PC-3 (cell line): ENCODE measurements at regions of chr13 and their contacts with region 1.

Region 1: DNA sequence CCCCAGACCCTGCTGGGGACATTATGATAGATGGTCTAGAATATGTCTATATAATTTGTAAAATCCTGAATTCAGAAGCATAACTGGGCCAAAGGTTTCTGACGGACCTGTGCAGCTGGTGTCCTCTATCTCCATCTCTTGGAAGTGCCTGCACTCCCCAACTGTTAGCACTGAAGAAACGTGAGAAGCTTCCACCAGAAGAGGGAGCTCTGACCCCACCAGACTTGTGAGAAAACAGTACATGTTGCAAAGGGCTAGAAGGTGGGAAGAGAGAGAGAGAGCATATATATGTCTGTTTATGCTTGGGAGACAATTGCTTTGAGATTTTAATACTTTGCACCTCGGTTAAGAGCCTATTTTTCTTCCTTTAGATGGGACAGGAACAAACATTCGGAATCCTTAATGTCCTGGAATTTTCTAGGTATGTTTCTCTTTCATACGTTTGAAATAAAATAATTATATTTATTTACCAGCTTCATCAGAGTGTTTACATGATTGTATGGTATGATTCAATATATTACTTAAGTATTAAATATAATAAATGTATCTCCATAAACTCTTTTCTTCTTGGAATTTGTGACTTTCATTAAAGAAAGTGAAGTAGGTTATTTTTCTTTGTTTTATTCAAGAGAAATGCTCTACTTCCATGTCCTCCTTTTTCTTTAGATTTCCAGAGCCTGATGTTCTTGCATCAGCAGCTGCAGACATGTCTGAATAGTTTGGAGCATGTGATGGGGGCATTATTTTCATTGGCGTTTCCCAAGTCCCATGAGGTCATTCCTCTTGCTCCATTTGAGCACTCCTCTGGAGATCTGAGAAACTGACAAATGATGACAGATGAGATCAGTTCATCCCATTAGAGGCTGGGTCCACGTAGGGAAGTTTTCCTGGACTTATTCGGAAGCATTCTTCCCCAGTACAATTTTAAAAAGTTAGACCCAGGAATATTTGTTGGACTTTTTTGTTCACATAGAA is 202.9 kb downstream of the ATP8A2 start:
- DNase-seq: peak; percentile 88
- ATAC-seq: peak; percentile 97
- H3K4me3 ChIP-seq: no peak overlapping the region
- H3K27ac ChIP-seq: no peak overlapping the region
- H3K4me1 ChIP-seq: no peaks in the 10 kb centered on the region
- H3K27me3 ChIP-seq: peaks cover 64% of the 10 kb centered on the region
- CTCF ChIP-seq: peak; percentile 88

Region 2: DNA sequence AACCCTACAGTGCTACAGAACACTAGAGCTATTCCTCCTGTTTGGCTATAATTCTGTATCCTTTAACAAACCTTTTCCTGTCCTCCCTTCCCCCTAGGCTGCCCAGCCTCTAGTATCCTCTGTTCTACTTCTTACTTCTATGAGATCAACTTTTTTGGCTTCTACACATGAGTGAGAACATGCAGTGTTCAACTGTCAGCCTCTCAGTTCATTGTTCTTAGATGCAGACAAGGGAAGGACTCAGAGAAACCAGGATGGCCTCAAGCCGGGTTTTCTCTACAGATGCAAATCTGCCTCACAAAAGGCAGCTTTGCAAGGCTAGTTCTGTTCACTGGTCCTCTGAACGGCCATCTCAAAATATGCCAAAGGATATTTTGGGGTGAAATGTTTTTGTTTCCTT is 421.0 kb before region 1 on chr13:
- CTCF ChIA-PET with region 1: no interaction called
- POLR2A ChIA-PET with region 1: no interaction called
- intact Hi-C with region 1: no loop called
- DNase-seq: no peak
- ATAC-seq: no peak
- H3K4me3 ChIP-seq: no peak overlapping the region
- H3K27ac ChIP-seq: no peak overlapping the region
- H3K4me1 ChIP-seq: no peaks in the 10 kb centered on the region
- H3K27me3 ChIP-seq: peaks cover 71% of the 10 kb centered on the region
- CTCF ChIP-seq: no peak

Region 3: DNA sequence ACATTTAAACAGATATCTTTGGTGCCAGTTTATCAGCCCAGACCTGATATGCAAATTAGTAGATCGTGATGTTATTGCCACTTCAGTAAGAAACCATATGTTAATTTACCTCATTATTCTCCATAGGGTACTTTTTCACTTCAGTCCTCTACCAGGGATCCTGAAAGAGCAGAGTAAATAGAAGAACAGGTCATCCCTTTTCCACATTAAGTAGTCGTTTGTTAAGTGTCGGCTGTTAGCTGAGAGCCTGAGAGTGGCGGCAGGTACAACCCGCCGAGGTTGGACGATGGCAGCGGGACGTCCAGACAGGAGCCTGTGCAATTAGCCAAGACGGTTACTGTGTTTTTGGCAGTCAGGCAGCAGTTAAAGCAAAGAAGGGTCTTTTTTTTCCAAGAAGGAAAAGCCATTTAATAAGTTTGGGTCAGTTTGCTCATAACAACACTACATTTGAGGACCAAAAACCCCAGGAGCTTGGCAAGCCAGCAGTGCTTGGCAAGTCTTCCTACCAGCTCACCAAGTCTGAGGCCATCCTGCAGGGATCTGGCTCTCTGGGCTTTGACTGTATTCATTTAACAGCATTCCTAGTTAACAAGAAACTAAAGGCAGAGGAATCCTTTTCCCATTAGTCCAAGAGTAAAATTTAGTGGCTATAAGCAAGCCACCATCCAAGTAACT is 245.3 kb after region 1 on chr13:
- CTCF ChIA-PET with region 1: no interaction called
- POLR2A ChIA-PET with region 1: no interaction called
- intact Hi-C with region 1: loop called (anchors 10 kb)
- DNase-seq: no peak
- ATAC-seq: no peak
- H3K4me3 ChIP-seq: no peak overlapping the region
- H3K27ac ChIP-seq: no peak overlapping the region
- H3K4me1 ChIP-seq: no peaks in the 10 kb centered on the region
- H3K27me3 ChIP-seq: no peaks in the 10 kb centered on the region
- CTCF ChIP-seq: no peak

Region 4: DNA sequence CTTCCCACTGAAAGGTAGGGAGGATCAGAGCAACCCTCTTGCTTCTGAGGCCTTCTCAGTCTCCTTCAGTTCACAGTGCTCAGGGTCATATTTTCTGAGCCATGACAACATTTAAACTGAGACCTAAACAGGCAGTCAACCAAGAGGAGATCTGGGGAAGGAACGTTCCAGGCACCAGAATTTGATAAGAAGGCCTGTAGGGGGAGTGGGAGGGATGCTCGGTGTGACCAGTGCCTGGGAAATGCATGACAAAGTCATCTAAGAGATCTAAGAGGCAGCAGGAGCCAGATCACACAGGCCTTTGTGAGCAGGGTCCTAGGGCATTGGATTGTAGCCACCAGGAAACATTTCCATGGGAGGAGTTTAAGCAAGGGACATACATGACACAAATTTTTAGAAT is 405.5 kb after region 1 on chr13:
- CTCF ChIA-PET with region 1: no interaction called
- POLR2A ChIA-PET with region 1: no interaction called
- intact Hi-C with region 1: loop called (anchors 10 kb)
- DNase-seq: peak; percentile 47
- ATAC-seq: peak; percentile 68
- H3K4me3 ChIP-seq: no peak overlapping the region
- H3K27ac ChIP-seq: no peak overlapping the region
- H3K4me1 ChIP-seq: peaks cover 4% of the 10 kb centered on the region; the same call in 1 of the 2 replicates
- H3K27me3 ChIP-seq: no peaks in the 10 kb centered on the region
- CTCF ChIP-seq: peak; percentile 55

Region 5: GRCh38 chr13:26071691-26072090 is 497.0 kb after region 1 on chr13:
- CTCF ChIA-PET with region 1: no interaction called
- POLR2A ChIA-PET with region 1: interaction called, 4 read pairs
- intact Hi-C with region 1: loop called (anchors 1 kb)
- DNase-seq: no peak
- ATAC-seq: no peak
- H3K4me3 ChIP-seq: no peak overlapping the region
- H3K27ac ChIP-seq: no peak overlapping the region
- H3K4me1 ChIP-seq: no peaks in the 10 kb centered on the region
- H3K27me3 ChIP-seq: peaks cover 7% of the 10 kb centered on the region; the same call in 1 of the 2 replicates
- CTCF ChIP-seq: no peak

Region 6: DNA sequence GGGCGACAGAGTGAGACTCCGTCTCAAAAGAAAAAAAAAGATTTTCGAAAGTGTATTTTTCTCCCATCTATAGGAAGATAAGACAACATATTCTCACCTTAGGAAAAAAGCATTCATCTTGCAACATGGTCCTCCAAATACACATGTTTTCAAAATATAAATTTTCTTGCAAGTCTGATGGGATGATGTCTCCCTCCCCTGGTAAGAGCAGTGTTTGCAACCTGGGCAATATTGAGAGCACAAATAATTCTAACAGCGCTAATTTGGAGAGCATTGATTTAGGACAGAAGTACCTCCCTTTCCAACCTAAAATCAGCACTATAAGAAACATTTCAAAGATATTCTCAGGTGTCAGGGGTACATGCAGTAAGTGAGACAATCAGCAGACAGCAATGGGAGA is 538.1 kb after region 1 on chr13:
- CTCF ChIA-PET with region 1: no interaction called
- POLR2A ChIA-PET with region 1: no interaction called
- intact Hi-C with region 1: loop called (anchors 1 kb)
- DNase-seq: peak; percentile 37
- ATAC-seq: no peak
- H3K4me3 ChIP-seq: no peak overlapping the region
- H3K27ac ChIP-seq: no peak overlapping the region
- H3K4me1 ChIP-seq: no peaks in the 10 kb centered on the region
- H3K27me3 ChIP-seq: peaks cover 49% of the 10 kb centered on the region
- CTCF ChIP-seq: peak; percentile 67